IMR-90 (cell line): ENCODE measurements at regions of chr18 and their contacts with region 1.

Region 1: GRCh38 chr18:25661831-25662230 is 309.9 kb upstream of the ZNF521 start:
- DNase-seq: peak; percentile 17
- ATAC-seq: peak; percentile 24; the same call in 1 of the 2 replicates
- H3K4me3 ChIP-seq: no peak overlapping the region
- H3K27ac ChIP-seq: no peak overlapping the region
- H3K4me1 ChIP-seq: peaks cover 3% of the 10 kb centered on the region
- H3K27me3 ChIP-seq: no peaks in the 10 kb centered on the region
- CTCF ChIP-seq: no peak
- POLR2A ChIP-seq: no peak
- RAD21 ChIP-seq: no peak

Region 2: DNA sequence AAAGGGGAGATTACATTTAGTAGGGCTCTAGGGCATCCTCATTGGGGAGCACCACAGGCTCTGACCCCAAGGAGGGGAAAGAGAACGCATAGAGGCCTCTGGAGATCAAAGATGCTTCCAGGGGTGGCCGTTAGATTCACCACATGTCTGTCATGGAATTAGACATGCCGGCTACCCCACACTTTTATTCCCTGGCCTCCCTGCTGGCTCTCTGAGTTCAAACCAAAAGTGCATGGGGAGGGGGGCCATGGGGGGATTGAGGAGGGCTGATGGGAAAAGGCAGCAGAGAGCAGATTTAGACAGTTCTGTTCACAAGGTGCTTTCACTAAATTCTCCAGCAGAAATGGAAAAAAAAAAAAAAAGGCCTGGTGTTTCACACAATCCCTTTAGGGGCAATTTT is 245.5 kb before region 1 on chr18:
- CTCF ChIA-PET with region 1: no interaction called
- POLR2A ChIA-PET with region 1: no interaction called
- dilution Hi-C with region 1: no loop called
- in situ Hi-C with region 1: no loop called
- intact Hi-C with region 1: no loop called
- DNase-seq: no peak
- ATAC-seq: no peak
- H3K4me3 ChIP-seq: no peak overlapping the region
- H3K27ac ChIP-seq: no peak overlapping the region
- H3K4me1 ChIP-seq: no peaks in the 10 kb centered on the region
- H3K27me3 ChIP-seq: peaks cover 6% of the 10 kb centered on the region; the same call in 1 of the 2 replicates
- CTCF ChIP-seq: no peak
- POLR2A ChIP-seq: no peak
- RAD21 ChIP-seq: no peak

Region 3: GRCh38 chr18:25795213-25795612 is 133.4 kb after region 1 on chr18:
- CTCF ChIA-PET with region 1: no interaction called
- POLR2A ChIA-PET with region 1: no interaction called
- dilution Hi-C with region 1: no loop called
- in situ Hi-C with region 1: no loop called
- intact Hi-C with region 1: no loop called
- DNase-seq: no peak
- ATAC-seq: no peak; the same call in 1 of the 2 replicates
- H3K4me3 ChIP-seq: no peak overlapping the region
- H3K27ac ChIP-seq: no peak overlapping the region
- H3K4me1 ChIP-seq: peaks cover 4% of the 10 kb centered on the region
- H3K27me3 ChIP-seq: no peaks in the 10 kb centered on the region
- CTCF ChIP-seq: no peak
- POLR2A ChIP-seq: no peak
- RAD21 ChIP-seq: no peak

Region 4: DNA sequence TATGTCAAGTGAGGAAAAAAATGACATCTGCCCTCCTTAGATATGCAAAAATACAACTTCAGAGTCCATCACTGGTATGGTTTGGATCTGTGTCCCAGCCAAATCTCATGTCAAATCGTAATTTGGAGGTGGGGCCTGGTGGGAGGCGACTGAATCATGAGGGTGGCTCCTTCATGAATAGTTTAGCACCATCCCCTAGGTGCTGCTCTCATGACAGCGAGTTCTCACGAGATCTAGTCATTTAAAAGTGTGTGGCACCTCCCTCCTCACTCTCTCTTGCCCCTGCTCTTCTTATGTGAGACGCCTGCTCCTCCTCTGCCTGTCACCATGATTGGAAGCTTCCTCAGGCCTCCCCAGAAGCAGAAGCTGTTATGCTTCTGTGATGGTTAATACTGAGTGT is 466.0 kb after region 1 on chr18:
- CTCF ChIA-PET with region 1: no interaction called
- POLR2A ChIA-PET with region 1: no interaction called
- dilution Hi-C with region 1: no loop called
- in situ Hi-C with region 1: no loop called
- intact Hi-C with region 1: no loop called
- DNase-seq: no peak
- ATAC-seq: no peak
- H3K4me3 ChIP-seq: no peak overlapping the region
- H3K27ac ChIP-seq: no peak overlapping the region
- H3K4me1 ChIP-seq: no peaks in the 10 kb centered on the region
- H3K27me3 ChIP-seq: no peaks in the 10 kb centered on the region; the same call in 1 of the 2 replicates
- CTCF ChIP-seq: no peak
- POLR2A ChIP-seq: no peak
- RAD21 ChIP-seq: no peak

Region 5: GRCh38 chr18:26480897-26481895 is 819.4 kb after region 1 on chr18:
- CTCF ChIA-PET with region 1: no interaction called
- POLR2A ChIA-PET with region 1: interaction called, 11 read pairs
- dilution Hi-C with region 1: no loop called
- in situ Hi-C with region 1: no loop called
- intact Hi-C with region 1: no loop called
- DNase-seq: peak; percentile 96
- ATAC-seq: peak; percentile 87
- H3K4me3 ChIP-seq: no peak overlapping the region
- H3K27ac ChIP-seq: peak overlapping the region; percentile 82
- H3K4me1 ChIP-seq: peaks cover 18% of the 10 kb centered on the region
- H3K27me3 ChIP-seq: no peaks in the 10 kb centered on the region
- CTCF ChIP-seq: no peak
- POLR2A ChIP-seq: no peak; the same call in 1 of the 2 replicates
- RAD21 ChIP-seq: 0 out of 2 replicates have a peak, but pooled peaks have one; percentile 2